ENCODE measurements at regions of chr16 and their contacts with region 1.

Region 1: GRCh38 chr16:68528686-68529379 is 10.3 kb upstream of the ZFP90 start:
- DNase-seq: peak; percentile 87 to 90
- ATAC-seq: peak; percentile 83 to 88
- H3K4me3 ChIP-seq: peak overlapping the region; percentile 14; the same call in 1 of the 3 replicates
- H3K27ac ChIP-seq: no peak overlapping the region
- H3K4me1 ChIP-seq: peaks cover 4% of the 10 kb centered on the region; the same call in 1 of the 3 replicates
- CTCF ChIP-seq: peak; percentile 95
- EP300 ChIP-seq: no peak
- POLR2A ChIP-seq: no peak
- RAD21 ChIP-seq: peak; percentile 95 to 96

Region 2: GRCh38 chr16:68396481-68396880 is 132.4 kb before region 1 on chr16:
- CTCF ChIA-PET with region 1: no interaction called
- POLR2A ChIA-PET with region 1: no interaction called
- DNase-seq: peak; percentile 32
- ATAC-seq: peak; percentile 26 to 71; a peak in 3 of 6 replicates
- H3K4me3 ChIP-seq: no peak overlapping the region
- H3K27ac ChIP-seq: no peak overlapping the region
- H3K4me1 ChIP-seq: no peaks in the 10 kb centered on the region
- CTCF ChIP-seq: peak; percentile 24; the same call in 2 of the 3 replicates
- EP300 ChIP-seq: no peak
- POLR2A ChIP-seq: no peak
- RAD21 ChIP-seq: peak; percentile 36 to 41; a peak in 2 of 5 replicates

Region 3: GRCh38 chr16:68478526-68479250 is 50.1 kb before region 1 on chr16:
- CTCF ChIA-PET with region 1: no interaction called
- POLR2A ChIA-PET with region 1: no interaction called
- DNase-seq: no peak
- ATAC-seq: no peak
- H3K4me3 ChIP-seq: no peak overlapping the region
- H3K27ac ChIP-seq: no peak overlapping the region
- H3K4me1 ChIP-seq: no peaks in the 10 kb centered on the region
- CTCF ChIP-seq: no peak
- EP300 ChIP-seq: no peak
- POLR2A ChIP-seq: no peak
- RAD21 ChIP-seq: no peak

Region 4: DNA sequence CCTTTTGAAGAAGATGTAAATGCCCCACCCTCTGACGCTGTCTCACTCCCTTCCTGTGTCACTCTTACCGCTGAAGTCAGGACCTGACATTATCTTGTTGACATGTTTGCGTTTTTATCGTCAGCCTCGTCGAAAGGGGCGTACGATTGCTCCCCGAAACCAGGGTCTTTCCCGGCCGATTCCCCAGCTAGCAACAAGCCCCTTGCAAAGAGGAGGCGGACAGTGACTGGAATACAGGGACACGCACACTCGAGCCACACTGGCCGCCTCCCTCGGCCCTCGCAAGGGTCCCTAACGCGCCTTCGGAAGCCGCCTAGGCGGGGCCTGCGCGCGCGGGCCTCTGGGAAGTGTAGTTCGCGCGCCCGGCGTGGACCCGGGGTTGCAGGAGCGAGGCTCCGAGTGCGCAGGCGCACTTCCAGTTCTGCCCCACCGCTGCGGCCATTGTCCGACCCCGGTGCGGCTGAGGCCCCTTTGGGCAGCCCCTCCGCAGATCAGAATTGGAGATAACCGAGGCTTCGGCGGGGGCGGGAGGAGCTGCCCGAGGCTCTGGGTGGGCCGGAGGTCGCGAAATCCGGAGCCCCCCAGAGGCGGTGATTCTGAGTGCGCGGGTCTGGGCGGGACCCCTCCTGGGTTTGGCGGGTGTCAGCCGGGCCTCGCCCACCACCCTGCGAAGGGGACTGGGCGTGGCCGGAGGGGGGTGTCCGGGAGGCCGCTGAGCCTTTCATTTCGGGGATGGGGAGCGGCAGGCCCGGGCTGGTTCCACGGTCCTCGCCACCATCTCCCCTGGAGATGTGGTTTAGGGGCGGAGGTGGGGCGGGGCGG is 10.3 kb after region 1 on chr16 and contains the start of gene ZFP90:
- CTCF ChIA-PET with region 1: interaction called, 29 read pairs
- POLR2A ChIA-PET with region 1: no interaction called
- DNase-seq: peak; percentile 90 to 96
- ATAC-seq: peak; percentile 96 to 99
- H3K4me3 ChIP-seq: peak within 1 kb of the TSS; percentile 84
- H3K27ac ChIP-seq: peak within 1 kb of the TSS; percentile 88
- H3K4me1 ChIP-seq: peaks cover 5% of the 10 kb centered on the region; the same call in 1 of the 3 replicates
- CTCF ChIP-seq: no peak
- EP300 ChIP-seq: no peak
- POLR2A ChIP-seq: peak; percentile 56
- RAD21 ChIP-seq: no peak
- polyA plus RNA-seq, gene ZFP90: 21.6 and 31.9 TPM in 2 replicates

Region 5: DNA sequence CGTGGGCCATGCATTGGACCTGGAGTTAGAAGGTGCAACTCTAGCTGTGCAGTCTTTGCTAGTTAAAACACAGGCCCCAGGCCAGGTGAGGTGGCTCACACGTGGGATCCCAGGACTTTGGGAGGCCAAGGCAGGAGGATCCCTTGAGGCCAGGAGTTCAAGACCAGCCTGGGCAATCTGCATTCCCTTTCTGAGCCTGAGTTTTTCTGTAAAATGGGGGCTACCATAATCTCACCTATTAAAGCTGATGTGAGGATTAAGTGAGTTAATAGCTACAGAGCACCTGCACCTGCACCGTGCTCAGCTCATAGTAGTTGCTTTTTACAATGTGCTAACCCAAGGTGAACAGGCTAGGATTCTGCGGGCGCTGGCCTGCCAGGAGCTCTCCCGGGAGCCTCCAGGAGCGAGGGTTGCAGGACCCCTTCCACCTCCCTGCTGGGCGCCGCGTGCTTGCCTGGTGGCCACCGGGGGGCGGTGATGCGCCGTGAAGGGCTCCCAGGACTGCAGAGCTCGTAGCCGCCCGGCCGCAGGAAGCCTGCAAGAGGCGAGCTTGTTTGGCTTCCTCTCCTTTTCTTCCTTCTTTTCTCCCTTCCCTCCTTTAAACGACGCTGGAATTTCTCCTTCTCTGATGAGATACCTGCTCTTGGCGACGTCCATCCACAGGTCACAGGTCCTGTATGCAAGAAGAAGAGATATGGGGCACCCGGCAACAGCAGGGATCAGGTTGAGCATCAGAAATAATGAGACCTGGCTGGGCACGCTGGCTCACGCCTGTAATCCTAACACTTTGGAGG is 61.6 kb after region 1 on chr16:
- CTCF ChIA-PET with region 1: interaction called, 18 read pairs
- POLR2A ChIA-PET with region 1: no interaction called
- DNase-seq: peak; percentile 48 to 71
- ATAC-seq: peak; percentile 86 to 100
- H3K4me3 ChIP-seq: no peak overlapping the region
- H3K27ac ChIP-seq: no peak overlapping the region
- H3K4me1 ChIP-seq: no peaks in the 10 kb centered on the region
- CTCF ChIP-seq: peak; percentile 54
- EP300 ChIP-seq: no peak
- POLR2A ChIP-seq: no peak
- RAD21 ChIP-seq: peak; percentile 83

Region 6: GRCh38 chr16:68704232-68704867 is 175.5 kb after region 1 on chr16:
- CTCF ChIA-PET with region 1: interaction called, 17 read pairs
- POLR2A ChIA-PET with region 1: no interaction called
- DNase-seq: peak; percentile 82 to 89
- ATAC-seq: peak; percentile 84 to 86
- H3K4me3 ChIP-seq: no peak overlapping the region
- H3K27ac ChIP-seq: peak overlapping the region in 1 of 2 experiments; percentile 46; a peak in 3 of 6 replicates
- H3K4me1 ChIP-seq: peaks cover 20% of the 10 kb centered on the region
- CTCF ChIP-seq: peak; percentile 90
- EP300 ChIP-seq: no peak
- POLR2A ChIP-seq: no peak
- RAD21 ChIP-seq: peak; percentile 97

Region 7: GRCh38 chr16:68902008-68902968 is 373.5 kb after region 1 on chr16:
- CTCF ChIA-PET with region 1: interaction called, 10 read pairs
- POLR2A ChIA-PET with region 1: no interaction called
- DNase-seq: peak; percentile 58 to 68
- ATAC-seq: peak; percentile 87 to 91
- H3K4me3 ChIP-seq: no peak overlapping the region
- H3K27ac ChIP-seq: peak overlapping the region in 1 of 2 experiments; percentile 38; a peak in 3 of 6 replicates
- H3K4me1 ChIP-seq: peaks cover 12% of the 10 kb centered on the region
- CTCF ChIP-seq: peak; percentile 96
- EP300 ChIP-seq: no peak
- POLR2A ChIP-seq: no peak
- RAD21 ChIP-seq: peak; percentile 96 to 97

Measured in A549 (cell line).